ENCODE measurements at regions of chr19 and their contacts with region 1.

Region 1: DNA sequence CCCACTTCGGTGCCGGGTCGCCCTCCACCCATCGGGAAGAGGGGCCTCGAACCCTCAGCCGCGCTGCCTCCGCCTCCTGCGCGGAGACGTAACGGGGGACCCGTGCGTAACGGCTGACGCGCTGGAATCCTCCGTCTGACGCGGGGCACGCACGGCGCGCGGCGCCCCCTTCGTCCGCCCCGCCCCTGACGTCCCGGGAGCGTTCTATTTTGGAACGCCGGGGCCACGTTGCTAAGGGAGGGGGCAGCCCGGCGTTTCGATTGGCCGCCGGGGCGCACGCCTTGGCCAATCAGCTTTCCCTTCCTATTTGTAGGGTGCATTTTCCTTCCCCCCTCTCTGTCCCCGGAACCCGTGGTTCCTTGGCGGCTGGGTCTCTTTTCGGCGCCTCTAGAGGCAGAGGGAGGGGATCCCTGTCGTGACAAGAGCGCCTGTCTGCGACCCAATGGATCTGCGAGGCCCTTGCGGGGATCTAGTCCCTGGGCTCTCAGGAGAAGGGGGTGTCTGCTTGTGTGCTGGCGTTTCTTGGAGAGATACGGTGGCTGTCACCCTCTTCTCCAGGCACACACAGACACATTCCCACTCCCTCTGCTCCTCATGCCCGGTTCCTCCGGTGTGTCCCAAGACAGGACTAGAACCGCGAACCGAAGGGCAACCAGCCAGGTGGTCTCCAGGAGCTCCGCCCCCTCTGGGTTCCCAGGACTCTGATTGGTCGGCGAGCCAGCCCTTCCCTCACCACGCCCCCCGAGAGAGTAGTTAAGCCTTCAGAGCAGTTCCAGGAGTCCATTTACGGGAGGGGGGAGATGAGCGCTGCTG is 1.5 kb downstream of the FOSB start:
- DNase-seq: peak; percentile 98
- H3K4me3 Mint-ChIP-seq: peak overlapping the region; percentile 86
- H3K27ac Mint-ChIP-seq: peak overlapping the region; percentile 94
- H3K4me1 Mint-ChIP-seq: peaks cover 28% of the 10 kb centered on the region
- H3K27me3 Mint-ChIP-seq: peaks cover 49% of the 10 kb centered on the region

Region 2: DNA sequence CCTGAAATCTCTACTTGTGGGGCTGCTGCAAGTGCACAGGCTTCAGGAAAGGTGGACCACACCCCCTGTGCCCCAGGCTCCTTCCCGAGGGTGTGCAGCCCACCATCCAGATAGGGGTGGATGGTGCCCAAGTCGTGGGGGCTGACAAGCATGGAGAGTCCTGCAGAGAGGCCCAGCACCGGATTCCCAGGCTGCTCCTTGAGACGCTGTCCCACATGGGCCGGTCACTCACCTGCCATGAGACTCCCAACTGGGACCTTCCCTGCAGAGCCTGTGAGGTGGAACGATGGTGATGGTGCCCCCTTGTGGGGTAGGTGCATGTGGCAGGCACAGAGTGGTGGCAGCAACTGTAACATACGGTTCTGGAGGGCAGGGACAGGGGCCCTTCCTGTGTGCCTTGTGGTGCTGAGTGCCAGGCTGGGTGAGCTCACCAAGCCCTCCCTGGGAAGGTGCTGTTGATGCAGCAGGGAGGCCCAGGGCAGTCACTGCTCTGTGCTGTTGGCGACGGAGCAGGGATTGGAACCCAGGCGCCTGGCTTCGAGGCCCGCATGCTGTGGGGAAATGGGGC is 343.3 kb before region 1 on chr19:
- intact Hi-C with region 1: no loop called
- DNase-seq: peak; percentile 91
- H3K4me3 Mint-ChIP-seq: no peak overlapping the region
- H3K27ac Mint-ChIP-seq: no peak overlapping the region
- H3K4me1 Mint-ChIP-seq: peaks cover 21% of the 10 kb centered on the region
- H3K27me3 Mint-ChIP-seq: no peaks in the 10 kb centered on the region

Region 3: DNA sequence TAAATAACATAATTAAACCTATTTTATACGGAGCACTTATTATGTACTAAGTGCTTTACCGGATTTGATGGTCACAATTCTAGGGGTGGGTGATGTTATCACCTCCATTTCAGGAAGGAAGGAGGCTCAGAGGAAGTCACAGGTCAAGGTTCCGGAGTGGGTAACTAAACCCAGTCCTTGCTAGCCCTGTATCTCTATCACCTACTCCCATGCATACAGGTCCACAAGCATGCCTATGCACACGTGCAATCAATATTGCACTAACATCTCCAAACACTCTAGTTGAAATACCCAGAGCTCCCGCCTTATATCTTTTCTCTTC is 19.4 kb before region 1 on chr19:
- intact Hi-C with region 1: loop called (anchors 1 kb)
- DNase-seq: no peak
- H3K4me3 Mint-ChIP-seq: peak overlapping the region; percentile 97
- H3K27ac Mint-ChIP-seq: peak overlapping the region; percentile 100
- H3K4me1 Mint-ChIP-seq: peaks cover 35% of the 10 kb centered on the region
- H3K27me3 Mint-ChIP-seq: peaks cover 18% of the 10 kb centered on the region

Region 4: DNA sequence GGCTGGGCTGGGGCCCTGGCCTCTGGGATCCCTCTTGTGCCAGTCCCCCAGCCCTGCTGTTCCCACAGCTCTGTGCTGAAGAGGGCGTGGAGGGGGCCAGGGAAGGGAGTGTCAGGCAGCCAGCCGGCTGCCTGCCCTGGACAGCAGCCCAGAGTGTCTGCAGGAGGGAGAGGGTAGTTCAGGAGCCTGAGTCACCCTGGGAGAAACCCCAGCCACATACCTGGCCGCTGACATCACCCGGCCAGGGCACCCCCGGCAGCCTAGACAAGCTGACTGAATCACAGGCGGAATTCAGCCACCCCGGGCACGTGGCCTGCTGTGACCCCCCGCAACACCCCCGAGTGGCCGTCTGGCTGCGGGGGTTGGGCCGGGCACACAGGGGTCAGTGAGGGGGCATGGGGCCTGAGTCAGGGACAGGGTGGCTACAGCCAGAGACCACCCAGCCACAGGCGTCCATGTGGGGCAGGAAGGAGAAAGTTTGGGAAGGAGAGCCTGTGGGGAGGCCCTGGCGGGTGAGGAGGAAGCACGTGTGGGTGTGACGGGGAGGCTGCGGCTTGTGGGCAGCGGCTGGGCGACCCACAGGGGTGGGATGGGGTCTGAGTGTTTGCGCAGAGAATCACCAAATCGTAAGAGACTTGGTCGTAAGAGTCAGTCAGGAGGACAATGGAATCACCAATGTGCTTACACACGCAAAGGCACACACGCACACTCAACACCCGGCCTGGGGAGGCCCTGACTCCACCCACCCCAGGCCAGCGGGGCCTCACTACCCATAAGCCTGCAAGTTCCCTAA is 13.4 kb before region 1 on chr19:
- intact Hi-C with region 1: loop called (anchors 1 kb)
- DNase-seq: peak; percentile 76
- H3K4me3 Mint-ChIP-seq: peak overlapping the region; percentile 65
- H3K27ac Mint-ChIP-seq: peak overlapping the region; percentile 76
- H3K4me1 Mint-ChIP-seq: peaks cover 29% of the 10 kb centered on the region
- H3K27me3 Mint-ChIP-seq: peaks cover 25% of the 10 kb centered on the region